ENCODE measurements at regions of chr19 and their contacts with region 1.

Region 1: DNA sequence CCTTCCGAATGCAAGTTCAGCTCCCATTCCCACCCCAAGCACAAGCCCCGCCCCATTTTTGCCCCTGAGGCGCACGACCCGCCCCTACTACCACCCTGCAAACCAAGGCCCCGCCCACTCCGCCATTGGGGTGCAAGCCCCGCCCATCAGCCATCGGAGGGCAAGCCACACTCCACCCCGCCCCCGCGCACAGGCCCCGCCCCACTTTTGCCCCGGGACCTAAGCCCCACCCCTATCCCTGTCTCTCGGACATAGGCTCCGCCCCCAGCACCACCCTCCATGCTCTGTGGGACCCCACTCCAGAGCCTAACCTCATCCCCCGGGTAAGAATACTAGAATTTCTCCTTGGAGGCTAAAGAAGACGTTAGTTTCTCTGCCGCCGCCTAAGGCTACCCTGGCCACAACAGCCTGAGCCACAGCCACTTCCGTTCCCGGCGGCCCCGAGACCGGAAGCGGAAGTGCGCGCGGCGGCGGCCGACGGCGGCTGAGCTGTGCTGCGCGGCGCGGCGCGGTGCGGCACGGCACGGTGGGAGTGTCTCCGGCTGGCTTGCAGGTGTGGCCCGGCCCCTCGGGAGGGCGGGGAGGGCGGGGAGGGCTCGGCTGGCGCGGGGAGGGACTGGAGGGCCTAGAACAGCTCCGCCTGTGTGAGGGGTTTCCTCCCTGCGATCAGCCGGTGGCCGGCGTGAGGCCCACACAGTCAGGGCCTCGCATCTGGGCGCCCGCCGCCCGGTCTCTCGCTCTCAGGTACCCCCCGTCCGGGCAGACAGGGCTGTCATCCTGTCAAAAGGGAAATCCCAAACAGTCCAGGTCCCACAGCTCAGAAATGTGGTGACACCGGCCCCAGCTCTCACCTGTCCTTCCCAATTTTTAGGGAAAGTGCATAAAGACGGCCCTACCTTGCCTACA is at the start of gene ZNF333:
- DNase-seq: peak; percentile 100
- ATAC-seq: peak; percentile 96
- H3K4me3 Mint-ChIP-seq: peak within 1 kb of the TSS; percentile 89
- H3K27ac Mint-ChIP-seq: peak within 1 kb of the TSS; percentile 100
- H3K4me1 Mint-ChIP-seq: peaks cover 22% of the 10 kb centered on the region
- H3K27me3 Mint-ChIP-seq: no peaks in the 10 kb centered on the region
- total RNA-seq, gene ZNF333: 7.3 TPM

Region 2: GRCh38 chr19:14571695-14572490 is 118.0 kb before region 1 on chr19 and contains the start of gene NDUFB7:
- CTCF ChIA-PET with region 1: interaction called, 249 read pairs
- POLR2A ChIA-PET with region 1: interaction called, 3 read pairs
- DNase-seq: peak; percentile 93
- ATAC-seq: peak; percentile 97
- H3K4me3 Mint-ChIP-seq: peak within 1 kb of the TSS; percentile 97
- H3K27ac Mint-ChIP-seq: peak within 1 kb of the TSS; percentile 92
- H3K4me1 Mint-ChIP-seq: peaks cover 42% of the 10 kb centered on the region
- H3K27me3 Mint-ChIP-seq: no peaks in the 10 kb centered on the region
- total RNA-seq, gene NDUFB7: 133 to 142 TPM

Region 3: GRCh38 chr19:14639536-14640277 is 50.1 kb before region 1 on chr19:
- CTCF ChIA-PET with region 1: no interaction called
- POLR2A ChIA-PET with region 1: no interaction called
- DNase-seq: no peak
- ATAC-seq: no peak
- H3K4me3 Mint-ChIP-seq: no peak overlapping the region
- H3K27ac Mint-ChIP-seq: no peak overlapping the region
- H3K4me1 Mint-ChIP-seq: no peaks in the 10 kb centered on the region
- H3K27me3 Mint-ChIP-seq: no peaks in the 10 kb centered on the region

Region 4: GRCh38 chr19:14674764-14675163 is 15.1 kb before region 1 on chr19 and contains the start of gene ADGRE3:
- CTCF ChIA-PET with region 1: interaction called, 19 read pairs
- POLR2A ChIA-PET with region 1: no interaction called
- DNase-seq: no peak
- ATAC-seq: no peak
- H3K4me3 Mint-ChIP-seq: no peak within 1 kb of the TSS
- H3K27ac Mint-ChIP-seq: no peak within 1 kb of the TSS
- H3K4me1 Mint-ChIP-seq: no peaks in the 10 kb centered on the region
- H3K27me3 Mint-ChIP-seq: peaks cover 16% of the 10 kb centered on the region
- total RNA-seq, gene ADGRE3: not detected

Region 5: GRCh38 chr19:14916848-14917247 is 227.0 kb after region 1 on chr19:
- CTCF ChIA-PET with region 1: no interaction called
- POLR2A ChIA-PET with region 1: no interaction called
- DNase-seq: no peak
- ATAC-seq: no peak
- H3K4me3 Mint-ChIP-seq: no peak overlapping the region
- H3K27ac Mint-ChIP-seq: no peak overlapping the region
- H3K4me1 Mint-ChIP-seq: no peaks in the 10 kb centered on the region
- H3K27me3 Mint-ChIP-seq: peaks cover 2% of the 10 kb centered on the region

Measured in activated CD8-positive, alpha-beta T cell treated with anti-CD3 and anti-CD28 coated beads, Interleukin-2, amount 10 ng/mL, durations not matched to agents 7 days and 5 days (primary cell).